ENCODE measurements at regions of chr9 and their contacts with region 1.

Region 1: GRCh38 chr9:133792721-133793470 is 54.7 kb upstream of the SARDH start:
- DNase-seq: peak; percentile 94

Region 2: DNA sequence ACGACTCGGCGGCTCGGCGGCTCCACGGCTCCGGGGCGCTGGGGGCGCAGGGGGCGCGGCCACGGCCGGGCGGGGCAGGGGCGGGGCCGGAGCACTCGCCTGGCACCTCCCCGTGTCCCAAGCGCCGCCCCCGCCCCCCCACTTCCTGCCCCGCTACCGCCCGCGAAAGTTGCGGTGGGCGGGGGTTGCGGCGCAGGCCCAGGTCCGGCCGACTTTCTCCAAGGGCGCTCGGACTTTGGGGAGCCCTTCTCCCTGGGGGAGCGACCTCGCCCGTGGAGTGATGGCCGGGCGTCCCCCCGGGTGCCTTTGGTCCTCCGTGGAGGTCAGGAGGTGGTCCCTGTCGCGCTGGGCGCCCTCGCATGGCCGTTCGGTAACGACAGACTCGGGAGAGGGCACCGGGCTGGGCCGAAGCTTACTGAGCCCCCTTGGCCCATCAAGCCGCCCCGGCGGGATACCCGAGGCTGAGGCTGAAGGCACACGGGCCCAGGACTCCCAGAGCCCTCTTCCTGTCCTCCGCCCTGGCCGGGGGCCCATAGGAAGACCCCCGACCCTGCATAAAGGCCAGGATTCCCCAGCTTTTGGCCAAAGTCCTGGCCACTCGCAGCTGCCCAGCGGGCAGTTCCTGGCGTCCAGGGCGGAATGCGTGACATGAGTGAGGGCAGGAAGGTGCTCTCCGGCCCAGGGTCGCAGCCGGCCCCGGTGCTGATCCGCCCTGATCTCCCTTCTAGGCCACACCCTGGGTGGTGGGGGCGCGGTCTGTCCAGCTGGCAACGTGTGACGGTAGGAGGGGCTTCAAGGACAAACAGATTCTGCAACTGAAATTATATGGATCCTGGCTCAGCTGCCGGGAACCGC is 200.1 kb after region 1 on chr9:
- intact Hi-C with region 1: loop called (anchors 1 to 2 kb)
- DNase-seq: peak; percentile 97

Measured in posterior vena cava (tissue), 2 donors.